ENCODE measurements at regions of chr6 and their contacts with region 1.

Region 1: GRCh38 chr6:25490018-25490801 is 161.8 kb upstream of the SCGN start:
- DNase-seq: peak; percentile 70
- H3K4me3 Mint-ChIP-seq: no peak overlapping the region
- H3K27ac Mint-ChIP-seq: no peak overlapping the region
- H3K4me1 Mint-ChIP-seq: peaks cover 4% of the 10 kb centered on the region
- H3K27me3 Mint-ChIP-seq: no peaks in the 10 kb centered on the region

Region 2: DNA sequence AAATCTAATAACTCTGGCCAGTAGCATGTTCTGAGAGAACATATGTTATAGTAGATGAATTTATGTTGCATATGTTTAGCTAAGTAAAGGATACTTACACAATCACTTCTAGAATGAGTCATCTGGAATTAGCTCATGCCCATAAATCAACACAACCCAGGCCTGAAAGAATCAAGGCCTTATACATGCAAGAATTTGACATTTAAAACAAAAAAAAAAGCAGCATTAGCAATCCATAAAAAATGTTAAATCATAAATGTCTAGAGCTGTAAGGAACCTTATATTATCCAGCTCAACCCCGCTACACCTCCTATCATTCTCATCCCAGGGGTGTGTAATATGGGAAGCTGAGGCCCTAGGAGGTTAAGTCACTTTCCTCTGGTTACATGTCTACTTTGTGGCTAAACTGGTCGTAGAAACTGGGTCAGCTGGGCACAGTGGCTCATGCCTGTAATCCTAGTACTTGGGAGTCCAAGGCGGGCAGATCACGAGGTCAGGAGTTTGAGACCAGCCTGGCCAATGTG is 316.2 kb before region 1 on chr6:
- CTCF ChIA-PET with region 1: no interaction called
- POLR2A ChIA-PET with region 1: no interaction called
- DNase-seq: no peak
- H3K4me3 Mint-ChIP-seq: no peak overlapping the region
- H3K27ac Mint-ChIP-seq: no peak overlapping the region
- H3K4me1 Mint-ChIP-seq: peaks cover 71% of the 10 kb centered on the region
- H3K27me3 Mint-ChIP-seq: no peaks in the 10 kb centered on the region

Region 3: GRCh38 chr6:25223490-25223991 is 266.7 kb before region 1 on chr6:
- CTCF ChIA-PET with region 1: interaction called, 36 read pairs
- POLR2A ChIA-PET with region 1: interaction called, 3 read pairs
- DNase-seq: peak; percentile 66
- H3K4me3 Mint-ChIP-seq: peak overlapping the region; percentile 38
- H3K27ac Mint-ChIP-seq: no peak overlapping the region
- H3K4me1 Mint-ChIP-seq: peaks cover 16% of the 10 kb centered on the region
- H3K27me3 Mint-ChIP-seq: no peaks in the 10 kb centered on the region

Region 4: GRCh38 chr6:25278914-25279747 is 211.1 kb before region 1 on chr6 and contains the start of gene CARMIL1:
- CTCF ChIA-PET with region 1: interaction called, 69 read pairs
- POLR2A ChIA-PET with region 1: interaction called, 8 read pairs
- DNase-seq: peak; percentile 69
- H3K4me3 Mint-ChIP-seq: peak within 1 kb of the TSS; percentile 75
- H3K27ac Mint-ChIP-seq: no peak within 1 kb of the TSS
- H3K4me1 Mint-ChIP-seq: peaks cover 20% of the 10 kb centered on the region
- H3K27me3 Mint-ChIP-seq: peaks cover 19% of the 10 kb centered on the region
- total RNA-seq, gene CARMIL1: 1.3 to 1.5 TPM

Measured in activated CD4-positive, alpha-beta memory T cell treated with anti-CD3 and anti-CD28 coated beads, Interleukin-2, amount 10 ng/mL, durations not matched to agents 7 days and 5 days (primary cell).